Activated CD8-positive, alpha-beta T cell treated with anti-CD3 and anti-CD28 coated beads for 36 hours (primary cell): ENCODE measurements at regions of chr7 and their contacts with region 1.

Region 1: GRCh38 chr7:44894888-44895580 is 9.7 kb upstream of the PURB start:
- DNase-seq: no peak
- ATAC-seq: peak; percentile 22
- H3K4me3 Mint-ChIP-seq: no peak overlapping the region
- H3K27ac Mint-ChIP-seq: peak overlapping the region; percentile 22
- H3K4me1 Mint-ChIP-seq: peaks cover 33% of the 10 kb centered on the region
- H3K27me3 Mint-ChIP-seq: no peaks in the 10 kb centered on the region
- CTCF ChIP-seq: no peak

Region 2: DNA sequence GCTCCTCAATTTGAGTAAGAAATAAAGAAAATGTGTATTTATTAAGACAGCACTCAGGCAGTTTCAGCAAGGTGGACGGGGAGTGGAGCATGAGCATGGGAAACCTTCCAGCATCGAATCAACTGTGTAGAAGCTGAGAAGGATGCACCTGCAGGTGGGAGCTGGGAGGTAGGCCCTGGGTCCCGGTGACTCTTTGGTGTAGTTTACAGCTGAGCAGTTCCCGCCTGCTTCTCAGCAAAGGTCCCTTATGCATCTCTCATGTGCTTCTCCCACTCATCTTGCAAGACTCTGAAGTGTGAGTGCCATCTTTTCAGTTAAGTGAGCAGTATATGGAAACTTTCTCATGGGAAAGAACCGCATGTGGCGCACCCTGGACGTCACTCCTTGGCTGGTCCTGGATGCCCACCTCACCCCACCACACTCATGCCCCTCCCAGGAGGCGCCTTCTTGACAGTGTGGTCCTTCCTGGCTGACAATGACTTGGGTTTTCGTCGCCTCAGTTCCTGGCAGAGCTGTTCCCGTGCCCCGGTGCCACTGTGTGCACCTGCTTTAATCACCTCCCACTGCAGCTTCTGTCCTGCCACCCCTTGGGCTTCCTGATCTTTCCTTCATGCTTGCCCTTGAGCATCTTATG is 10.1 kb after region 1 on chr7:
- CTCF ChIA-PET with region 1: interaction called, 3 read pairs
- POLR2A ChIA-PET with region 1: interaction called, 14 read pairs
- intact Hi-C with region 1: no loop called
- DNase-seq: no peak
- ATAC-seq: no peak
- H3K4me3 Mint-ChIP-seq: no peak overlapping the region
- H3K27ac Mint-ChIP-seq: no peak overlapping the region
- H3K4me1 Mint-ChIP-seq: no peaks in the 10 kb centered on the region
- H3K27me3 Mint-ChIP-seq: no peaks in the 10 kb centered on the region
- CTCF ChIP-seq: no peak